Activated naive CD4-positive, alpha-beta T cell treated with anti-CD3 and anti-CD28 coated beads for 36 hours (primary cell): ENCODE measurements at regions of chr19 and their contacts with region 1.

Region 1: GRCh38 chr19:54168174-54168917 is 4.6 kb downstream of the TMC4 start:
- DNase-seq: peak; percentile 96
- H3K4me3 Mint-ChIP-seq: no peak overlapping the region
- H3K27ac Mint-ChIP-seq: no peak overlapping the region
- H3K4me1 Mint-ChIP-seq: peaks cover 19% of the 10 kb centered on the region
- H3K27me3 Mint-ChIP-seq: peaks cover 7% of the 10 kb centered on the region

Region 2: GRCh38 chr19:54121259-54121658 is 47.1 kb before region 1 on chr19:
- CTCF ChIA-PET with region 1: no interaction called
- intact Hi-C with region 1: no loop called
- DNase-seq: no peak
- H3K4me3 Mint-ChIP-seq: no peak overlapping the region
- H3K27ac Mint-ChIP-seq: no peak overlapping the region
- H3K4me1 Mint-ChIP-seq: peaks cover 13% of the 10 kb centered on the region
- H3K27me3 Mint-ChIP-seq: no peaks in the 10 kb centered on the region

Region 3: DNA sequence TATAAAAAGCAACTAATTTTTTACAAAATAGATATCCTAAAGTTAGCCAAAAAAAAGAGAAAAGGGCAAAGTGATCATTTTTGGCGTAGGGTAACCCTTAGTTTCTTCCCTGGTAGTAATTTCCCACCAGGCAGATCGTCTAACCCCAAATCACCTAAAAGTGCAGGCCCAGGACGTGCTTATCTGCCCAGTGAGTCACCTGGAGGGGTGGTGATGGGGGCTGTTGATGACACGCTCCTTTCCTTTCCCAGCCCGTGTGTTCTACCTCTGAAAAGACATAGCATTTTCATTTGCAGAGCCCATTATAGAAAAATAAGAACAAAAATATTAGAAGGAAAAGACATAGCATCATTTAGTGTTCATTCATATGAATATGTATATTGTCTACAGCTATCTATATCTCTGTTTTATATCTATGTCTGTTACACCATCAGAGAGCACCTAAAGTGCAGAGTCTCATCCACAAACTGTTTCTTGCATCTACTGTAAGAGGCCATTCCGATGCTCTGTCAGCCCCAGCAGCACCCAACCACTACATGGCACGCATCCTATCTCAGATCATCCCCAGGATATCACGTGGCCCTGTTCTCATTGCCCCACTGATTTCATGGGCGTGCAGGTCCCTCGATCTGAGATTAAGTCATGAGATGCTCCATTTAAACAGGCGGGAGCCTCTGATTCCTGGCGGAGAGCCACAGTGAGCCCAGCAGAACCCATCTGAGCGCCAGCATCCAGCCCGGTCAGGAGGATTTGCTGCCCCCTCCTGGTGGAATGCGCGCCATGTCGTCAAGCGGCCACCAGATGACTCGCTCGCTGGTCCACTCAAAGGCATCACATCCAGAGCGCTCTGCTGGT is 63.0 kb after region 1 on chr19:
- CTCF ChIA-PET with region 1: interaction called, 5 read pairs
- intact Hi-C with region 1: loop called (anchors 1 kb)
- DNase-seq: peak; percentile 91
- H3K4me3 Mint-ChIP-seq: no peak overlapping the region
- H3K27ac Mint-ChIP-seq: no peak overlapping the region
- H3K4me1 Mint-ChIP-seq: peaks cover 3% of the 10 kb centered on the region
- H3K27me3 Mint-ChIP-seq: peaks cover 20% of the 10 kb centered on the region

Region 4: DNA sequence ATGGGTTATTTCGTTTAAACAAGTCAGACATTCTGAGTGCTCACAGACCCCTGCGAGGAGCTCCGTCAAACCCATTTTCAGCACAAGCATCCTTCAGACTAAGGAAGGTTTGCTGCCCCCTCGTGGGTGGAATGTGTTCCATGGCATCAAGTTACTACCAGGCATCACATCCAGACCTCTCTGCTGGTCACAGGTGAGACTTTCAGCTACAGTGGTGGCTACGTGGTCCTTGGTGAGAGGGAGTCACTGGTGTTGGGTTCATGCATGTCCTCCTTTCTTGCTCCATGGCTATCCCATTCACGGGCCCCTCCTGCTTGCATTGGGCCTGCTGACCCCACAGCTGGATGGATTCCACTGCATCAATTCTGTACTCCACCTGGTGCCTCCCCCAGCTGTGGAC is 97.8 kb after region 1 on chr19:
- CTCF ChIA-PET with region 1: interaction called, 13 read pairs
- intact Hi-C with region 1: loop called (anchors 1 kb)
- DNase-seq: peak; percentile 89
- H3K4me3 Mint-ChIP-seq: no peak overlapping the region
- H3K27ac Mint-ChIP-seq: no peak overlapping the region
- H3K4me1 Mint-ChIP-seq: no peaks in the 10 kb centered on the region
- H3K27me3 Mint-ChIP-seq: peaks cover 6% of the 10 kb centered on the region